HepG2 (cell line): ENCODE measurements at regions of chr17 and their contacts with region 1.

Region 1: DNA sequence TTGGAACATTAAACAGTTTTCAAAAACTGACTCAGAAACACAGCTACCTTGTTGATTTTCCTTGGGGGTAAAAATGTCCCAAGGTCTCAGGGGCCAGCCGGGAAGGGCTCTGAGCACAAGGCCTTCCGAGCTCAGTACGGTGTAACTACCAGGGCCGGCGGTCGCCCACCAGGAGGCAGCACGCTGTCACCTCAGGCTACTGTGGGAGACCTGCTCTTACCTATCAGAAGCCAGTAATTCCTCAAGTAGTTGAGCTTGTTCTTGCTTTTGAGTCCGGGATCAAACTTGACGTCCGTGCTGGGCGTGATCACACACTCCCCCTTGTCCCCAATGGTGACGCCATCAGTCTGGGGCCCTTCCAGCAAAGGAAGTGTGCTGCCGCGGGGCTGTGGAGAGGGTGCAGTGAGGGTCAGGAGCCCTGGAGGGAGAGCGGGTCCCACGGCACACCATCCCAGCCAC is 43.4 kb upstream of the ICAM2 start:
- DNase-seq: peak; percentile 48
- ATAC-seq: peak; percentile 97
- H3K4me3 ChIP-seq: no peak overlapping the region
- H3K27ac ChIP-seq: no peak overlapping the region
- H3K4me1 ChIP-seq: peaks cover 15% of the 10 kb centered on the region
- H3K27me3 ChIP-seq: no peaks in the 10 kb centered on the region
- CTCF ChIP-seq: peak; percentile 94
- EP300 ChIP-seq: no peak
- POLR2A ChIP-seq: no peak
- RAD21 ChIP-seq: peak; percentile 92

Region 2: GRCh38 chr17:63998050-63998720 is 65.6 kb before region 1 on chr17 and contains the start of gene PRR29:
- CTCF ChIA-PET with region 1: no interaction called
- POLR2A ChIA-PET with region 1: no interaction called
- in situ Hi-C with region 1: no loop called
- intact Hi-C with region 1: no loop called
- DNase-seq: peak; percentile 66
- ATAC-seq: peak; percentile 76
- H3K4me3 ChIP-seq: peak within 1 kb of the TSS; percentile 67 to 87 (median 79)
- H3K27ac ChIP-seq: no peak within 1 kb of the TSS
- H3K4me1 ChIP-seq: peaks cover 49% of the 10 kb centered on the region
- H3K27me3 ChIP-seq: peaks cover 10 to 37% of the 10 kb centered on the region in 2 experiments; a peak in 4 of 5 replicates
- CTCF ChIP-seq: 0 out of 2 replicates have a peak, but pooled peaks have one; percentile 11
- EP300 ChIP-seq: no peak
- POLR2A ChIP-seq: no peak
- RAD21 ChIP-seq: no peak
- total RNA-seq, gene PRR29: 0.07 and 0.11 TPM in 2 replicates

Region 3: GRCh38 chr17:64073771-64074703 is 10.2 kb after region 1 on chr17:
- CTCF ChIA-PET with region 1: no interaction called
- POLR2A ChIA-PET with region 1: interaction called, 13 read pairs
- in situ Hi-C with region 1: no loop called
- intact Hi-C with region 1: no loop called
- DNase-seq: no peak
- ATAC-seq: peak; percentile 34; the same call in 2 of the 3 replicates
- H3K4me3 ChIP-seq: peak overlapping the region in 1 of 3 experiments; percentile 44; a peak in 1 of 6 replicates
- H3K27ac ChIP-seq: peak overlapping the region; percentile 58
- H3K4me1 ChIP-seq: peaks cover 40% of the 10 kb centered on the region
- H3K27me3 ChIP-seq: no peaks in the 10 kb centered on the region
- CTCF ChIP-seq: no peak
- EP300 ChIP-seq: no peak
- POLR2A ChIP-seq: no peak
- RAD21 ChIP-seq: no peak

Region 4: GRCh38 chr17:64081802-64082799 is 18.3 kb after region 1 on chr17:
- CTCF ChIA-PET with region 1: no interaction called
- POLR2A ChIA-PET with region 1: interaction called, 18 read pairs
- in situ Hi-C with region 1: no loop called
- intact Hi-C with region 1: no loop called
- DNase-seq: peak; percentile 93
- ATAC-seq: peak; percentile 83
- H3K4me3 ChIP-seq: peak overlapping the region; percentile 3 to 39 (median 25); a peak in 4 of 6 replicates
- H3K27ac ChIP-seq: peak overlapping the region; percentile 84
- H3K4me1 ChIP-seq: peaks cover 85% of the 10 kb centered on the region
- H3K27me3 ChIP-seq: no peaks in the 10 kb centered on the region
- CTCF ChIP-seq: no peak; the same call in 1 of the 2 replicates
- EP300 ChIP-seq: peak in 1 of 2 experiments; percentile 98; a peak in 2 of 4 replicates
- POLR2A ChIP-seq: no peak
- RAD21 ChIP-seq: peak; percentile 28; the same call in 1 of the 2 replicates

Region 5: DNA sequence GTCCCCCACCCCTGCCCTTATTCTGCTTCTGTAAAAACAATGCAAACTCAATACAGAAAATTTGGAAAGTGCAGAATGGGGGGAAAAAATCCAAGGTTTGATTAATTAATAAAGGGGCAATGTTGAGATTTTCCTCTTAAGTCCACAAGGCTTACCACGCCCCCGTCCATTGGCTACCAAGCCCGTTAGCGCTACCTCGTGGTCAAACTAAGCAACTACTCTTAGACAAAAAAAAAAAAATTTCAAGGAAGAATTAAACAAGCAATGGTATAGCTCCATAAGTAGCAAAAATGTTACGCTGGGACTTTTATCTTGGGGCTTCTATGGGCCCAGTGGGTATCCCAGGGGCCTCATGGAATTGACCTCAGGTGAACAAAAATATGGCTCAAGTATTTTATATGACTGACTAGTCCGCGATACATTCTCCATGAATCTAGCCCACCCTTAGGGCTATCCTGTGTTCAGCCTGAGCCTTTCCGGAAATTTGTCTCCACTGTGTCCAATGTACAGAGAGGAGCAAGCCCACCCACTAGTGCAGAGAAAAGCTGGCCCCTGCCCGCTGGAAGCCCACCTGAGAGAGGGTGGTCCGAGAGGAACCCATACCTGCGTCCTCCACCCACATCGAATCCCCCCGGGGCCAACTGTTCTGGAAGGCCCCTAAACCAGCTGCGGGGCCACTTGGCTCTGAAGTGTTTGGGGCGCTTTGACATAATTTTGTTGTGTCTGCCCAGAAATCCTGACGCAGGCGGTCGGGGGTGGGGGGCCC is 218.3 kb after region 1 on chr17:
- CTCF ChIA-PET with region 1: no interaction called
- POLR2A ChIA-PET with region 1: no interaction called
- in situ Hi-C with region 1: loop called (anchors 10 kb)
- intact Hi-C with region 1: loop called (anchors 1 kb)
- DNase-seq: peak; percentile 72
- ATAC-seq: peak; percentile 48
- H3K4me3 ChIP-seq: no peak overlapping the region
- H3K27ac ChIP-seq: no peak overlapping the region
- H3K4me1 ChIP-seq: peaks cover 31% of the 10 kb centered on the region
- H3K27me3 ChIP-seq: no peaks in the 10 kb centered on the region; a peak in 1 of 5 replicates
- CTCF ChIP-seq: peak; percentile 85
- EP300 ChIP-seq: no peak
- POLR2A ChIP-seq: no peak
- RAD21 ChIP-seq: peak; percentile 85